ENCODE measurements at regions of chr20 and their contacts with region 1.

Region 1: GRCh38 chr20:62010551-62011402 is 54.9 kb downstream of the TAF4 start:
- DNase-seq: peak; percentile 20 to 37 (median 35)
- H3K4me3 ChIP-seq: no peak overlapping the region
- H3K4me3 Mint-ChIP-seq: no peak overlapping the region
- H3K27ac ChIP-seq: no peak overlapping the region
- H3K27ac Mint-ChIP-seq: peak overlapping the region in 2 of 7 donors; percentile 1 to 44
- H3K4me1 ChIP-seq: peaks cover 0 to 4% of the 10 kb centered on the region in 2 donors
- H3K4me1 Mint-ChIP-seq: peaks cover 6% of the 10 kb centered on the region
- H3K27me3 ChIP-seq: no peaks in the 10 kb centered on the region
- H3K27me3 Mint-ChIP-seq: peaks cover 0 to 2% (median 0%) of the 10 kb centered on the region in 3 donors
- CTCF ChIP-seq: peak; percentile 77

Region 2: DNA sequence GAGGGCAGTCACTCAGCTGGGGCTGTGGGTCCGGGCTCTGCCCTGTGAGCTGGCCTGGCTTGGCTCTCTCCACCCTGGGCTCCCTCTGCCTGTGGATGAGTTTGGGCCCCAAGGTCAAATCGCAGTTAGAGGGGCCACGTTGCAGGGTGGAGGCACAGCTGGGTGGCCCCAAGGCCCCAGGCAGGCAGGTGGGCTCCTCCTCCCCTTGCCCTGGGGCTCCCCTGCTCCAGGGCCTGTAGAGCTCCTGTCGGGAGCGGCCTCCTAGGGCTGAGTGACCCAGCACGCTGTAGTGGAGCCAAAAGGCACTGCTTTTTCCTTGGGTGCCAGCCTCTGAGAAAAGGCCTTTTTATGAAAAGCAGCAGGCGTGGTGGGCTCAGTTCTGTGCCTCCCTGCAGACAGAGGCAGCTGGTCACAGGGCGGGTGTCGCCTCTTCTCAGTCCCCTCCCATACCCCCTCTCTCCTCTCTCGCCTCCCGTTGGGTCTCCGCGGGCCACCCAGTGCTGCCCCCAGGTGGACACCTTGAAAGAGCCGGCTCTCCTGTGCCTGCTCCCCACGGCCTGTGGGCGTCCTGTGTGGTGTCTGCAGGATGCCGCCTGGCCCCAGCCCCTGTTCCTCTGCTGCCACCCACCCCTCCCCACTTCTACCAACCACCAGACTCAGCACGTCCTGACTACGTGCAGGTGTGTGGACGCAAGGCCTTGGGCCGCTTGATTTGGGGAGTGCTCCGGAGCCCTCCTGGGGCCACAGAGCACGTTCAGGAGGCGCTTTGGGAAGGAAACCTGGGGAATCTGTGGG is 146.0 kb after region 1 on chr20:
- intact Hi-C with region 1: loop called (anchors 2 to 5 kb)
- DNase-seq: peak; percentile 54 to 60 (median 58)
- H3K4me3 ChIP-seq: no peak overlapping the region
- H3K4me3 Mint-ChIP-seq: no peak overlapping the region
- H3K27ac ChIP-seq: peak overlapping the region in 1 of 2 donors; percentile 6
- H3K27ac Mint-ChIP-seq: no peak overlapping the region
- H3K4me1 ChIP-seq: no peaks in the 10 kb centered on the region
- H3K4me1 Mint-ChIP-seq: peaks cover 3% of the 10 kb centered on the region
- H3K27me3 ChIP-seq: no peaks in the 10 kb centered on the region
- H3K27me3 Mint-ChIP-seq: peaks cover 0 to 3% (median 2%) of the 10 kb centered on the region in 3 donors
- CTCF ChIP-seq: peak; percentile 83